Activated CD8-positive, alpha-beta T cell treated with anti-CD3 and anti-CD28 coated beads for 36 hours (primary cell): ENCODE measurements at regions of chr3 and their contacts with region 1.

Region 1: DNA sequence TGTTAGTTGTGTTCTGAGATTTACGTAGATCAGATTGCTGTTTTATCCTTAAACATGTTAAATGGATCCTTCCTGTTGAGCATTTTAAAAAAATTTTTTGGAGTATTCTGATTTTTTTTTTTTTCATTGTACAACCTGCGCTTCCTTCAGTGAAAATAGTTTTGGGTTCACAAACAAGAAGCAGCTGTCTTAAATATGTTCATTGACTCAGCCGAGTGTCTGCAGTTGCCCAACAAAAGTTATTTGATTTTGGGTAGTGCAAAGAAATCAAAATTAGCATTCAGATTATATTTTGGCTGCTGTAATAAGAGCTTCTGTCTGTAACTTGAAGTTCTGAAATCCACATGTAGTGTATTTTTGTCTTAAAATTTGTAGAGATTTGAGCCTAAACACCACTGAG is 148.2 kb downstream of the BBX start:
- DNase-seq: no peak
- ATAC-seq: no peak
- H3K4me3 Mint-ChIP-seq: no peak overlapping the region
- H3K27ac Mint-ChIP-seq: no peak overlapping the region
- H3K4me1 Mint-ChIP-seq: peaks cover 21% of the 10 kb centered on the region
- H3K27me3 Mint-ChIP-seq: no peaks in the 10 kb centered on the region
- CTCF ChIP-seq: no peak

Region 2: DNA sequence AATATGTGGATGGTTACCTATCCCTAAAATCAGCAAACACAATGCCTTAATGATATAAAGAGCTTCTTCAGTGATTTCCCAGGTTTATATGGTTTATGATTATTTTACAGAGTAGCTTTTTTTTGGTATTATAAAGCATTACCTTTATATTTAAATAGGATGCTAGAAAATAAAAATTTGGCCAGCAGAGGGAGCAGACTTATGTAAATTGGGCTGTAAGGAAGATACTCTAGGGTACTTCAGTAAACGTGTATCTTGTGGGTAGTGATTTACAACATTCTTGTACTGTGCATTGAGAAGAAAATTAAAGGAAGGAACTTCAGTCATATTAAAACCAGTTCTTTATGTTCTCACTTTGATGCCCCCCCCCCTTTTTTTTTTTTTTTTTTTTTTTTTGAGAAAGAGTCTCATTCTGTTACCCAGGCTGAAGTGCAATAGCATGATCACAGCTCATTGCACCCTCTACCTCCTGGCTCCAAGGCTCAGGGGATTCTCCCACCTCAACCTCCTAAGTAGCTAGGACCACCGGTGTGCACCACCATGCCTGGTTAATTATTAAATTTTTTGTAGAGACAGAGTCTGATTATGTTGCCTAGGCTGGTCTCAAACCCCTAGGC is 19.6 kb after region 1 on chr3:
- CTCF ChIA-PET with region 1: interaction called, 60 read pairs
- POLR2A ChIA-PET with region 1: interaction called, 3 read pairs
- intact Hi-C with region 1: no loop called
- DNase-seq: no peak
- ATAC-seq: peak; percentile 72
- H3K4me3 Mint-ChIP-seq: no peak overlapping the region
- H3K27ac Mint-ChIP-seq: no peak overlapping the region
- H3K4me1 Mint-ChIP-seq: peaks cover 8% of the 10 kb centered on the region
- H3K27me3 Mint-ChIP-seq: no peaks in the 10 kb centered on the region
- CTCF ChIP-seq: peak; percentile 58

Region 3: GRCh38 chr3:108292905-108293328 is 621.9 kb after region 1 on chr3:
- CTCF ChIA-PET with region 1: no interaction called
- POLR2A ChIA-PET with region 1: no interaction called
- intact Hi-C with region 1: no loop called
- DNase-seq: peak; percentile 46
- ATAC-seq: peak; percentile 74
- H3K4me3 Mint-ChIP-seq: peak overlapping the region; percentile 48
- H3K27ac Mint-ChIP-seq: peak overlapping the region; percentile 84
- H3K4me1 Mint-ChIP-seq: peaks cover 57% of the 10 kb centered on the region
- H3K27me3 Mint-ChIP-seq: no peaks in the 10 kb centered on the region
- CTCF ChIP-seq: no peak